ENCODE measurements at regions of chr19 and their contacts with region 1.

Region 1: GRCh38 chr19:16076154-16076957 is at the start of gene TPM4:
- DNase-seq: peak; percentile 97
- H3K4me3 Mint-ChIP-seq: peak within 1 kb of the TSS; percentile 79
- H3K27ac Mint-ChIP-seq: peak within 1 kb of the TSS; percentile 97
- H3K4me1 Mint-ChIP-seq: peaks cover 64% of the 10 kb centered on the region
- H3K27me3 Mint-ChIP-seq: no peaks in the 10 kb centered on the region
- total RNA-seq, gene TPM4: 283 and 291 TPM in 2 replicates

Region 2: GRCh38 chr19:15836595-15837337 is 239.6 kb before region 1 on chr19:
- intact Hi-C with region 1: loop called (anchors 10 kb)
- DNase-seq: peak; percentile 99
- H3K4me3 Mint-ChIP-seq: peak overlapping the region; percentile 87
- H3K27ac Mint-ChIP-seq: peak overlapping the region; percentile 98
- H3K4me1 Mint-ChIP-seq: peaks cover 13% of the 10 kb centered on the region
- H3K27me3 Mint-ChIP-seq: no peaks in the 10 kb centered on the region

Region 3: DNA sequence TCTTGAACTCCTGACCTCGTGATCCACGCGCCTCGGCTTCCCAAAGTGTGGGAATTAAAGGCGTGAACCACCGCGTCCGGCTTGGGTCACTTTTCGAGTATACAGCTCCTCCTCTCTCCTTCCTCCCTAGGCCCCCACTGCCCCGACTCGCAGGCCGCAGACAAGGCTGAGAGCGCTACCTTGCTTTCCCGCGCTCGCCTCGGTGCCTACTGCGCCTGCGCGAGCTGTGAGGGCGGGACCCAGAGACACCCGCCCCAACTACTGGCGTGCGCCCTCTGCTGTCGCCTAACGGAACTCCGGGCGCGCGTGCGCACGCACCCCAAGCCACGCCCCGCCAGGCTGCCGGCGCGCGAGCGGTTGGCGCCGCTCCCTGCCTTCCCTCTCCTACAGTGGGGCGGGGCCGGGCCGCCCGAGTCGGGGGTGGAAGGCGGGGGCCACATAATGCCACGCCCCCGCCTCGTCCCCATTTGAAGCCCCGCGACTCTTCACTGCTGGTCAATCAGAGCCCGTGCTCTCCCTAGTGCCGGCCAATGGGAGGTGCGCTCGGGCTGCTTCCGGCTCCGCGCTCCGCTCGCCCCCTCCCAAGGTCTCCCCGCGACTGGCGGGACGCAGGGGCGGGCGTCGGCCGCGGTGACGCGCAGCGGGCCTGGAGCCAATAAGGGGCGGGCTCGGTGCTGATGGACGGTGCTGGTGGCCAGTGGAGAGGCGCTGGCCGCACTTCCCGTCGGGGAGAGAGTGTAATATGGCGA is 35.0 kb after region 1 on chr19 and contains the start of gene RAB8A:
- intact Hi-C with region 1: loop called (anchors 1 kb)
- DNase-seq: peak; percentile 100
- H3K4me3 Mint-ChIP-seq: peak within 1 kb of the TSS; percentile 95
- H3K27ac Mint-ChIP-seq: peak within 1 kb of the TSS; percentile 95
- H3K4me1 Mint-ChIP-seq: peaks cover 26% of the 10 kb centered on the region
- H3K27me3 Mint-ChIP-seq: no peaks in the 10 kb centered on the region
- total RNA-seq, gene RAB8A: 227 and 247 TPM in 2 replicates

Region 4: GRCh38 chr19:16118489-16119033 is 42.2 kb after region 1 on chr19:
- intact Hi-C with region 1: loop called (anchors 1 kb)
- DNase-seq: peak; percentile 82
- H3K4me3 Mint-ChIP-seq: peak overlapping the region; percentile 73
- H3K27ac Mint-ChIP-seq: peak overlapping the region; percentile 94
- H3K4me1 Mint-ChIP-seq: peaks cover 46% of the 10 kb centered on the region
- H3K27me3 Mint-ChIP-seq: no peaks in the 10 kb centered on the region

Region 5: GRCh38 chr19:16160943-16161560 is 84.7 kb after region 1 on chr19:
- intact Hi-C with region 1: loop called (anchors 2 kb)
- DNase-seq: peak; percentile 68
- H3K4me3 Mint-ChIP-seq: peak overlapping the region; percentile 68
- H3K27ac Mint-ChIP-seq: peak overlapping the region; percentile 86
- H3K4me1 Mint-ChIP-seq: peaks cover 17% of the 10 kb centered on the region
- H3K27me3 Mint-ChIP-seq: no peaks in the 10 kb centered on the region

Region 6: GRCh38 chr19:16197622-16198369 is 121.4 kb after region 1 on chr19 and contains the start of gene AP1M1:
- intact Hi-C with region 1: loop called (anchors 5 kb)
- DNase-seq: peak; percentile 100
- H3K4me3 Mint-ChIP-seq: peak within 1 kb of the TSS; percentile 93
- H3K27ac Mint-ChIP-seq: peak within 1 kb of the TSS; percentile 92
- H3K4me1 Mint-ChIP-seq: peaks cover 39% of the 10 kb centered on the region
- H3K27me3 Mint-ChIP-seq: no peaks in the 10 kb centered on the region
- total RNA-seq, gene AP1M1: 107 and 111 TPM in 2 replicates

Region 7: DNA sequence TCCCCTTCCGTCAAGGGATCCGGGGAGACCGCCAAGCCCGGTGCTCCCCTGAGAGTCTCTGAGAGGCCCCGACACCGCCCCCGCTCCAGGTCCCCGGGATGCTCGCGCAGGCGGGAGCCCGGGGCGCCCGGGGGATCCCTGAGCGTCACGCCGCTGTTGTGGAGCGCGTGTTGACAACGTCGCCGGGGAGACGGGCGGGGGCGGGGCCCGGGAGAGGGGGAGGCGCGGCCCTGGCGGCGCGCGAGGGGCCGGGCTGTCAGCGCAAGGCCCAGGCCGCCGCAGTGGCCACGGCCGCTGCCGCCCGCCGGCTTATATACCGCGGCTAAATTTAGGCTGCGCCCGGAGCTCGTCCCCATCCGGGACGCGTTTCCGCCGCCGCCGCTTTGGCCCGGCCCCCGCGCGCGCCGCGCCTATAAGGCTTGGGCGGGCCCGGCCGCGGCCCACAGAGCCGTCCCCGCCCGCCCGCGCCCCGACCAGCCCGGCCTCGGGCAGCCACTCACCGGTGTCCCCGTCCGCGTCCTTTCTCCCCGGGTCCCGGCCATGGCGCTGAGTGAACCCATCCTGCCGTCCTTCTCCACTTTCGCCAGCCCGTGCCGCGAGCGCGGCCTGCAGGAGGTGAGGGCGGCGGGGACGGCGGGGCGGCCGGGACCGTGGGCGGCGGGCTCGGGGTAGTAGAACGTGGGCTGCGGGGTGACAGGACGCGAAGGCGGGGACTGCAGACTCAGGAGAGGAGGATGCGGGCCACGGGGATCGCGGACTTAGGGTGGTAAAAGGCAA is 248.2 kb after region 1 on chr19 and contains the start of gene KLF2:
- intact Hi-C with region 1: loop called (anchors 10 kb)
- DNase-seq: peak; percentile 98
- H3K4me3 Mint-ChIP-seq: peak within 1 kb of the TSS; percentile 87
- H3K27ac Mint-ChIP-seq: peak within 1 kb of the TSS; percentile 58
- H3K4me1 Mint-ChIP-seq: peaks cover 31% of the 10 kb centered on the region
- H3K27me3 Mint-ChIP-seq: peaks cover 43% of the 10 kb centered on the region
- total RNA-seq, gene KLF2: 2.2 and 3.7 TPM in 2 replicates

Measured in activated CD4-positive, alpha-beta T cell treated with anti-CD3 and anti-CD28 coated beads, Interleukin-2, amount 10 ng/mL, durations not matched to agents 24 days and 14 days (primary cell).